Naive thymus-derived CD4-positive, alpha-beta T cell (primary cell): ENCODE measurements at regions of chrX and their contacts with region 1.

Region 1: GRCh38 chrX:54044126-54044876 is at the start of gene PHF8:
- DNase-seq: peak; percentile 84 to 96 (median 94)
- ATAC-seq: peak; percentile 90
- H3K4me3 ChIP-seq: peak within 1 kb of the TSS; percentile 80
- H3K4me3 Mint-ChIP-seq: peak within 1 kb of the TSS; percentile 84 to 96 (median 94)
- H3K27ac ChIP-seq: peak within 1 kb of the TSS; percentile 95
- H3K27ac Mint-ChIP-seq: peak within 1 kb of the TSS; percentile 93 to 99 (median 97)
- H3K4me1 ChIP-seq: peaks cover 9% of the 10 kb centered on the region in 2 donors
- H3K4me1 Mint-ChIP-seq: peaks cover 8 to 33% (median 17%) of the 10 kb centered on the region in 7 donors
- H3K27me3 ChIP-seq: no peaks in the 10 kb centered on the region
- H3K27me3 Mint-ChIP-seq: no peaks in the 10 kb centered on the region
- total RNA-seq, gene PHF8: 48.5 to 80.2 (median 54.5) TPM

Region 2: DNA sequence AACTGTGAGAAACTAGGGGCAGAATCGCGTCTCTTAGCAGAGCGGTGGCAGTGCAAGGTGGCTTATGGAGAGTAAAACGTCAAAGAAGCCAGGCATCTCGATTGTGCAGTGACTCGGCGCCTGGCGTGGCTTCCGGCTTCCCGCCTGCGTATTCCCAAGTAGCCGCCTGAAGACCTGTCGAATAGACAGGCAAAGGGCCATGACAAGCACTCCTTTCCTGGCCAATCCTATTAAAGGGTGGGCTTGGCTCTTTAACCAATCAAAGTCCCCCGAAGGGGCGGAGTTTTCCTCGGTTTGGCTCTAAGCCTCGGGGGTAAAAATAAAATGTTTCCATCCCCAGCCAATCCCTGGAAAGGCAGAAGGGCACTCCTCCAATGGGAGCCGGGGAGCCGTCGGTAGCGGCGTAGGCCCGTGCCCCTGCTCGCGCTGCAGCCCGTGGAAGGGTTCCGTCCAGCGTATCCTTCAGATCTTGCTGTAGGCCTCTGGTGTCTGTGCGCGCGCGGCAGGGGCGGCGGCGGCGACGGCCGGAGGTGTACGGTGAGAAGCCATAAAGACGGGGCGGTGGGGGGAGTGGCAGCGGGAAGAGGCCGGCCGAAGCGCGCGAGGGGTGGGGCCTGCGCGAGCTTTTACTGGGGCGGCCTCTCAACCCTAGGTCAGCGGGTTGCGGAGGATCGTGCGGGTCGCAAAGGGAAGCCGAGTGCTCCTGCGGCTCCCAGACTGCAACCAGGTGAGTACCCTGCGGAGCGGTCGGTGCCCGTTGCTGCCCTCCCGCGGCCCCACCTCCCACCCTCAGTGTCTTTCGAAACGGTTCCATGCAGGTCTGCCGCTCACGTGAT is 950.3 kb before region 1 on chrX and contains the start of gene KANTR:
- CTCF ChIA-PET with region 1: no interaction called
- POLR2A ChIA-PET with region 1: no interaction called
- intact Hi-C with region 1: loop called (anchors 5 kb)
- DNase-seq: peak; percentile 47 to 88 (median 83)
- ATAC-seq: peak; percentile 88
- H3K4me3 ChIP-seq: peak within 1 kb of the TSS; percentile 93
- H3K4me3 Mint-ChIP-seq: peak within 1 kb of the TSS; percentile 82 to 93 (median 88)
- H3K27ac ChIP-seq: peak within 1 kb of the TSS; percentile 73
- H3K27ac Mint-ChIP-seq: peak within 1 kb of the TSS; percentile 80 to 94 (median 91)
- H3K4me1 ChIP-seq: no peaks in the 10 kb centered on the region
- H3K4me1 Mint-ChIP-seq: peaks cover 9 to 27% (median 20%) of the 10 kb centered on the region in 7 donors
- H3K27me3 ChIP-seq: no peaks in the 10 kb centered on the region
- H3K27me3 Mint-ChIP-seq: no peaks in the 10 kb centered on the region
- total RNA-seq, gene KANTR: 12.5 to 29.9 (median 16.9) TPM

Region 3: DNA sequence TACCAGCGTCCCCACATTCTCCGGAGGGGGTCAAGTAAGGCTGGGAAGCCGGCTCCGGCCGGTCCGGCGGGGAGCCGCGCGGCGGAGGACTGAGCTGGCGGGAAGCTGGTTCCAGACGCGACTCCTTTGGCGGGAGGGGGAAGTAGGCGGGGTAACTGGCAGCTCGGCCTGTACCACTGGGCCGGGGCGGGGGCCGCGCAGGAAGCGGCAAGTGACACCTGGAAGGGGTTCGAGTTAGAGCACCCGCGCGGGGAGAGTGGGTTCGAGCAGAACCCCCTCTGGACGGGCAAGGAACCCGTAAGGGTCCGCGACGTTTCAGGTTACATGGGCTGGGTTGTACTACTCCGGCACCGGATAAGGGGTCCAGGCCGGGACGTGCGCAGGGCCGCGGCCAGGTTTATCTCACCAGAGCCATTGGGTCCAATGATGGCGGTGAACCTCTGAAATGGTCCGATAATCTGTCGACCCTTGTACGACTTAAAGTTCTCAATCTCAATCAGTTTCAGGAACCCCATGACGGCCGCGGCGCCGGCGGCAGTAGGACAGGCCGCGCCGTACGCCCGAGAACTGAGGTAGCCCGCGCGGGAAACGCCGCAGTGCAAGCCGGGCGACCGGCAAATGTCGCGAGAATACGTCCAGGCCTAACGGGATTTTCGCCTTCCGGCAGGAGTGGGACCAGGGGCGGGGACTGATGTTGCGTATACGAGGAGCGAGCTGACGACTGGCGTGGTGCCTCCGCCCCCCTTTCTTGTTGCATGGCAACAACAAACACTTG is 622.0 kb before region 1 on chrX and contains the start of gene SMC1A:
- CTCF ChIA-PET with region 1: no interaction called
- POLR2A ChIA-PET with region 1: interaction called, 8 read pairs
- intact Hi-C with region 1: loop called (anchors 1 to 5 kb)
- DNase-seq: peak; percentile 80 to 99 (median 98)
- ATAC-seq: peak; percentile 92
- H3K4me3 ChIP-seq: peak within 1 kb of the TSS; percentile 91
- H3K4me3 Mint-ChIP-seq: peak within 1 kb of the TSS; percentile 89 to 100 (median 96)
- H3K27ac ChIP-seq: peak within 1 kb of the TSS; percentile 91
- H3K27ac Mint-ChIP-seq: peak within 1 kb of the TSS; percentile 93 to 100 (median 99)
- H3K4me1 ChIP-seq: peaks cover 10 to 15% of the 10 kb centered on the region in 2 donors
- H3K4me1 Mint-ChIP-seq: peaks cover 12 to 46% (median 30%) of the 10 kb centered on the region in 7 donors
- H3K27me3 ChIP-seq: no peaks in the 10 kb centered on the region
- H3K27me3 Mint-ChIP-seq: no peaks in the 10 kb centered on the region
- total RNA-seq, gene SMC1A: 53.0 to 108 (median 67.7) TPM

Region 4: GRCh38 chrX:54182864-54183608 is 138.7 kb after region 1 on chrX and contains the start of gene FAM120C:
- CTCF ChIA-PET with region 1: interaction called, 3 read pairs
- POLR2A ChIA-PET with region 1: interaction called, 31 read pairs
- intact Hi-C with region 1: loop called (anchors 1 kb)
- DNase-seq: peak; percentile 23 to 70 (median 65)
- ATAC-seq: peak; percentile 79
- H3K4me3 ChIP-seq: peak within 1 kb of the TSS; percentile 62
- H3K4me3 Mint-ChIP-seq: peak within 1 kb of the TSS; percentile 70 to 92 (median 88)
- H3K27ac ChIP-seq: peak within 1 kb of the TSS; percentile 78
- H3K27ac Mint-ChIP-seq: peak within 1 kb of the TSS; percentile 81 to 91 (median 88)
- H3K4me1 ChIP-seq: peaks cover 22 to 27% of the 10 kb centered on the region in 2 donors
- H3K4me1 Mint-ChIP-seq: peaks cover 30 to 42% (median 39%) of the 10 kb centered on the region in 7 donors
- H3K27me3 ChIP-seq: no peaks in the 10 kb centered on the region
- H3K27me3 Mint-ChIP-seq: no peaks in the 10 kb centered on the region
- total RNA-seq, gene FAM120C: 13.5 to 24.7 (median 17.6) TPM

Region 5: DNA sequence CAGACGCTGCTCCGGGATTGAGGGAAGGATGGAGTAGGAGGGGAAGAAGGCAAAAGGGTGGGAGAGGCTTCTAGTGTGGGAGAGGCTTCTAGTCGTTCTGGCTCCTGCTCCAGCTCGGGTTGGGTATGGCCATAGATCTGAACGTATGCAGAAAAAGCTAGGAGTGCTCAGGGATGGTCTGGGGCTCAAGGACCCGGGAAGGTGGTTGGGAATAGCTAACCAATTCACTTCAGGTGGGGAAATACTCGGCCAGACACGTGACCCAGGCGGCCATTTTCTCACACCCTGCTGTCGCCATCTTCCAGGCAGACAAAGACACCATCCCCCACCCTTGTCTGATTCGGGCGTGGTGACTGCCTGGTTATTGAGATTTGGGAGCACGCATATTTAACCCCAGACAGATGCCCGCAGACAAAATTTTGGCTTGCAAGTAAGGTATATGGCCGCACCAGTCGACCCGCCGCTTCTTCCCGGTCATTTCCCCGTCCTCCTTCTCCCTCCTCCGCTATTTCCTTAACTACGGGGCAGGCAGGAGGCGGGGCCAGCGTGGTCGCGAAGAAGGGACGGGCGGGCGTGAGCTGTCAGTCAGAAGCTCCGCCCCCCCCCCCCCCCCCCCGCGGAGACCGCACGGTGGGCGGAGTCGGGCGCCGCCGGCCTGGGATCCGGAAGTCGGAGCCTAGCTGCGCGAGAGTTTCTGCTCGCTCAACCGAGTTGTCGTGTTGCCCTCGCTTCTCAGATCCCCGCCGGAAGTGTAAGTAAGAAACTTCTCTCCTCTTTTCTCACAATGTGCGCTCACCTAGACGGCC is 485.5 kb after region 1 on chrX and contains the start of gene GNL3L:
- CTCF ChIA-PET with region 1: no interaction called
- POLR2A ChIA-PET with region 1: interaction called, 11 read pairs
- intact Hi-C with region 1: loop called (anchors 1 kb)
- DNase-seq: peak; percentile 58 to 84 (median 76)
- ATAC-seq: peak; percentile 93
- H3K4me3 ChIP-seq: peak within 1 kb of the TSS; percentile 82
- H3K4me3 Mint-ChIP-seq: peak within 1 kb of the TSS; percentile 87 to 97 (median 94)
- H3K27ac ChIP-seq: peak within 1 kb of the TSS; percentile 82
- H3K27ac Mint-ChIP-seq: peak within 1 kb of the TSS; percentile 87 to 99 (median 93)
- H3K4me1 ChIP-seq: peaks cover 17 to 30% of the 10 kb centered on the region in 2 donors
- H3K4me1 Mint-ChIP-seq: peaks cover 10 to 46% (median 32%) of the 10 kb centered on the region in 7 donors
- H3K27me3 ChIP-seq: no peaks in the 10 kb centered on the region
- H3K27me3 Mint-ChIP-seq: no peaks in the 10 kb centered on the region
- total RNA-seq, gene GNL3L: 32.8 to 55.4 (median 41.8) TPM

Region 6: DNA sequence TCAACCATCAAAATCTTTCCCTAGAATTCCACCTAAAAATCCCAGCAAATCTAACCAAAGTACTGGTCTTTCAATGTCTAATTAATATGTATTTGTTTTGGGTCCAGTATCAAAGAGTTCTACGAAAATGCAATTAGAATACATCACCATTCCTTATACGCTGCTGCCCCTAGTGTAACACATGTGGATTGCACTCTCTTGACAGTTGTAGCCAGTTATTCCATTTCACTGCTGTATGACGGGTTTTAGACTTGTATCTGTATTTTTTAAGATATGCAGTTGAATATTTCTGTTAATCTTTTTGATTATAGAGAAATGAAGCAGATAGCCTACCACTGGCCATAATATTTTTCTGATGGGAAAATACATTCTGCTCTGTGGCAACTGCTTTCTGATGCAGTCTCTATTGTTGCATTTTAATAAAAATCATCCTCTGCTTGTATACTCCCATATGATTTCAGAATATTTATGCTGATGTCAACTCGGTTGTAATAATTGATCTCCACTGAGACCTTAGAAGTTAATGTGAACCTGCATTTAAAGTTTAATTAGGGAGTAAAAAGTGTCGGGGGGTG is 1013.5 kb after region 1 on chrX:
- CTCF ChIA-PET with region 1: no interaction called
- POLR2A ChIA-PET with region 1: interaction called, 3 read pairs
- intact Hi-C with region 1: loop called in 1 of 2 experiments (anchors 5 kb)
- DNase-seq: peak in 6 of 9 donors; percentile 11 to 46 (median 32)
- ATAC-seq: peak; percentile 84
- H3K4me3 ChIP-seq: peak overlapping the region; percentile 35
- H3K4me3 Mint-ChIP-seq: peak overlapping the region; percentile 12 to 87 (median 76)
- H3K27ac ChIP-seq: no peak overlapping the region
- H3K27ac Mint-ChIP-seq: peak overlapping the region in 7 of 9 donors; percentile 43 to 95 (median 90)
- H3K4me1 ChIP-seq: peaks cover 8 to 16% of the 10 kb centered on the region in 2 donors
- H3K4me1 Mint-ChIP-seq: peaks cover 8 to 29% (median 21%) of the 10 kb centered on the region in 7 donors
- H3K27me3 ChIP-seq: no peaks in the 10 kb centered on the region
- H3K27me3 Mint-ChIP-seq: peaks cover 0 to 5% (median 0%) of the 10 kb centered on the region in 5 donors